H1 (cell line): ENCODE measurements at regions of chrX and their contacts with region 1.

Region 1: GRCh38 chrX:114038358-114038757 is 545.5 kb upstream of the HTR2C start:
- DNase-seq: no peak
- H3K4me3 ChIP-seq: peak overlapping the region in 2 of 4 experiments; percentile 13 to 49; a peak in 1 of 8 replicates
- H3K27ac ChIP-seq: peak overlapping the region; percentile 71
- H3K4me1 ChIP-seq: peaks cover 3 to 14% (median 10%) of the 10 kb centered on the region in 4 experiments
- H3K27me3 ChIP-seq: no peaks in the 10 kb centered on the region
- CTCF ChIP-seq: no peak
- EP300 ChIP-seq: no peak
- POLR2A ChIP-seq: no peak; a peak in 1 of 3 replicates
- RAD21 ChIP-seq: no peak

Region 2: DNA sequence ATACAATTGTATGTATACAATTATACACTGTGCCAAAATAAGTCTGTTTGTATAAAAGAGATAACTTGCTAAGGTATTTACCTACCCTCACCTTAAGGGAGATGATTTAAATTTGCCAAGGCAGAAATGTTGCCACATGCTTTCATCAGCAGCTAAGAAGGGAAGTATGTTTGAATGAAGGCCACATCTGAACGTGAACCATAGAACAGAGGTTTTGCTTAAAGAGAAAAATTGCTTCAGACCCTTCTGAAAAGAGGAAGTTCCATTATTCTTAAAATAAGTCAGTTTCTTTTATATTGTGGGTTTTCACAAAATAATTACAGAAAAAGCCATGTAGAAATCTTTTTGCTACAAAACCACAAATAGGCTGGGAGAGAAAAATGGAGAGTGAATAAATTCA is 76.0 kb before region 1 on chrX:
- CTCF ChIA-PET with region 1: no interaction called
- POLR2A ChIA-PET with region 1: interaction called, 19 read pairs
- DNase-seq: no peak
- H3K4me3 ChIP-seq: no peak overlapping the region
- H3K27ac ChIP-seq: no peak overlapping the region
- H3K4me1 ChIP-seq: peaks cover 0 to 15% (median 4%) of the 10 kb centered on the region in 4 experiments; a peak in 3 of 7 replicates
- H3K27me3 ChIP-seq: no peaks in the 10 kb centered on the region
- CTCF ChIP-seq: no peak
- EP300 ChIP-seq: no peak
- POLR2A ChIP-seq: no peak
- RAD21 ChIP-seq: no peak

Region 3: DNA sequence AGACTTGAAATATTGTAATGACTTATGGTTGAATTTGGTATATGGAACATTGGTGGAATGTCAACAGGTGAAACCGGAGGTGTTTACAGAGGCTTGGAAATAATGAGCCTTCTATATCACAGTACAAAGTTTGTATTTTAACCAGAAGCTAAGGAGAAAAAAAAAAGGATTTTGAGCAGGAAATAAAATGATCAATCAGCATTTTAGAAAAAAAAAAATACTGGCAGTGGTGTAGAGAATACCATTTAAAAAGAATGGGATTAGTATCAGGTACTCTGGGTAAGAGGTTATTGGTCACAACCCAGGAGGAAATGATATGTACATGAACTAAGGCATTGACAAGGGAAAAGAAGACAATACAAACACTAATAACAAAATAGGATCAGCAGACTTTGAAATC is 41.6 kb before region 1 on chrX:
- CTCF ChIA-PET with region 1: no interaction called
- POLR2A ChIA-PET with region 1: interaction called, 10 read pairs
- DNase-seq: no peak
- H3K4me3 ChIP-seq: no peak overlapping the region
- H3K27ac ChIP-seq: no peak overlapping the region
- H3K4me1 ChIP-seq: peaks cover 0 to 6% (median 2%) of the 10 kb centered on the region in 4 experiments; a peak in 3 of 7 replicates
- H3K27me3 ChIP-seq: no peaks in the 10 kb centered on the region
- CTCF ChIP-seq: no peak
- EP300 ChIP-seq: no peak
- POLR2A ChIP-seq: no peak
- RAD21 ChIP-seq: no peak

Region 4: DNA sequence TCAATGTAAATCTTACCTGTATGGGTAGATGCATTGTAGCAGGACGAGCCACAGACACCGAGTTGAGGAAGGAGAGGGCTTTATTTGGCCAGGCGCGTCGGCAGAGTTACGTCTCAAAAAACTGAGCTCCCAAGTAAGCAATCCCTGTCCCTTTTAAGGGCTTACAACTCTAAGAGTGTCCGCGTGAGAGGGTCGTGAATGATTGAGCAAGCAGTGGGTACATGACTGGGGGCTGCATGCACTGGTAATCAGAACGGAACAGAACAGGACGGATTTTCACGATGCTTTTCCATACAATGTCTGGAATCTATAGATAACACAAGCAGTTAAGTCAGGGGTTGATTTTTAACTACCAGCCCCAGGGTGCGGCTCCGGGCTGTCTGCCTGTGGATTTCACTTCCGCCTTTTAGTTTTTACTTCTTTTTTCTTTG is 20.6 kb after region 1 on chrX:
- CTCF ChIA-PET with region 1: no interaction called
- POLR2A ChIA-PET with region 1: interaction called, 11 read pairs
- DNase-seq: no peak
- H3K4me3 ChIP-seq: no peak overlapping the region
- H3K27ac ChIP-seq: no peak overlapping the region
- H3K4me1 ChIP-seq: 0 out of 7 replicates have a peak, but pooled peaks cover 0 to 3% (median 0%) of the 10 kb centered on the region in 4 experiments
- H3K27me3 ChIP-seq: no peaks in the 10 kb centered on the region
- CTCF ChIP-seq: no peak
- EP300 ChIP-seq: no peak
- POLR2A ChIP-seq: no peak
- RAD21 ChIP-seq: no peak